ENCODE measurements at regions of chr1 and their contacts with region 1.

Region 1: DNA sequence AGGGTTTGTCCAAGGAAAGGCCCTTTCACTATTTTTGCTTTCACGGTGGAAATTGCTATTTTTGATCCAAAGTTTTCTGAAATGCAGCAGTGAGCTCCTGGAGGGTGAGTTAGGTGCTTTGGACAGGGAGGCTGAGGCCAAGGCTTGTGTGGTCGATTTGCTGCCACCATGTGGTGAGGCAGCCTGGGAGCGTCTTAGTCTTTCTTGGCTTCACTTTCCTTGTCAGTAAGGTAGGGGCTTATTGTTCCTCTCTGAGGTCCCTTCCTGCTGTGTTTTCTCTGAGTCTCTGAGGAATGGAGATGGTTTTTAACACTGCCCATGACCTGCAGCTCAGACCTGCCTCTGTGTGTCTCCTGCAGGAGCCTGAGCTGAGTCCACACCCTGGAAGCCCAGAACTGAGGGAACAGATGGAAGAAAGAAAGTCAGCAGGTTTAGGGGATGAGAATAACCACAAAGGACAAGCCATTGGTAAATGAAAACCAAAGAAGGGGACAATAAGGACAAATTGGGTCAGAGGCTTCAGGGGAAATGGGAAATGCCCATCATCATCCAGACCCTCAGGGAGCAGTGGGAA is 20.1 kb upstream of the S100A10 start:
- H3K4me3 ChIP-seq: no peak overlapping the region
- H3K27ac ChIP-seq: no peak overlapping the region
- H3K4me1 ChIP-seq: no peaks in the 10 kb centered on the region
- CTCF ChIP-seq: peak; percentile 51; the same call in 1 of the 2 replicates

Region 2: GRCh38 chr1:151867785-151868411 is 145.9 kb before region 1 on chr1:
- CTCF ChIA-PET with region 1: no interaction called
- POLR2A ChIA-PET with region 1: no interaction called
- H3K4me3 ChIP-seq: no peak overlapping the region
- H3K27ac ChIP-seq: no peak overlapping the region
- H3K4me1 ChIP-seq: no peaks in the 10 kb centered on the region
- CTCF ChIP-seq: no peak

Region 3: GRCh38 chr1:151881456-151881855 is 132.3 kb before region 1 on chr1:
- CTCF ChIA-PET with region 1: interaction called, 12 read pairs
- POLR2A ChIA-PET with region 1: no interaction called
- H3K4me3 ChIP-seq: no peak overlapping the region
- H3K27ac ChIP-seq: no peak overlapping the region
- H3K4me1 ChIP-seq: no peaks in the 10 kb centered on the region
- CTCF ChIP-seq: peak; percentile 35; the same call in 1 of the 2 replicates

Region 4: GRCh38 chr1:151920149-151920548 is 93.6 kb before region 1 on chr1:
- CTCF ChIA-PET with region 1: no interaction called
- POLR2A ChIA-PET with region 1: no interaction called
- H3K4me3 ChIP-seq: no peak overlapping the region
- H3K27ac ChIP-seq: no peak overlapping the region
- H3K4me1 ChIP-seq: no peaks in the 10 kb centered on the region
- CTCF ChIP-seq: no peak

Region 5: DNA sequence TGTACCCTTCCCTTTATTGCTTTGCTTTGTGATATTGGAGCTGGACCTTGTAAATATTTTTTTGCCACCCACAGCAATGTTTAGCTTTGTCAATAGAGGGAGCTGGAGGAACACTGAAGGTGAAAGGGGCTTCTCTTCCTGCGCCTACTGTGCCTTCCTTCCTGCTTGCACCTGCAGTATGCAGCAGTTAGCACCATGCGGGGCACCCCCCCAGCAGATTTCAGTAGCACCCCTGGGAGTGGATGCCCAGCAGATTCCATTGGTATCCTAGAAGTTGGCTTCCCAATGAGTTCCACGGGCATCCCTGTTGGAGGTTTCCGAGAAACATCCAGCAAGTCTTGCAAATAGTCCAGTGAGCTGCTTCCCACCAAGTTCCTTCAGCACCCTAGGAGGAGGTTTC is 45.7 kb before region 1 on chr1:
- CTCF ChIA-PET with region 1: interaction called, 32 read pairs
- POLR2A ChIA-PET with region 1: no interaction called
- H3K4me3 ChIP-seq: no peak overlapping the region
- H3K27ac ChIP-seq: no peak overlapping the region; the same call in 1 of the 2 replicates
- H3K4me1 ChIP-seq: peaks cover 8% of the 10 kb centered on the region; the same call in 1 of the 2 replicates
- CTCF ChIP-seq: peak; percentile 91

Region 6: DNA sequence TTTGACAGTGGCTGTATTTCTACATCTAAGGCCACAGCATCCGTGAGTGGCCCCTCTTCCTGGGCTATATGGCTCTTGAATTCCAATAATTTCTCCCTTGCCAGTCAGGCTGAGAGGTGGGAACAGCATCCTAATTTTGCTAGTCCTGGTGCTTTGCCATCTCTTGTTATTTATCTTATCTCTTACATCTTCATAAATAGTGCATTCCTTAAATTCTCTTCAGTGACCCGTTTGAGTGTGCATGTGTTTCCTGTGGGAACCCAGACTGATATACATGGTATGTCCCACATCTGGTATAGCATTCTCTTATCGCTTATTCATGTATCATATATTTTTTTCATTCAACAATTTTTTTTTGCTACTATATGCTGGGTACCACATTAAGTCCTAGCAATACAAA is 13.1 kb after region 1 on chr1:
- CTCF ChIA-PET with region 1: interaction called, 14 read pairs
- POLR2A ChIA-PET with region 1: no interaction called
- H3K4me3 ChIP-seq: no peak overlapping the region
- H3K27ac ChIP-seq: no peak overlapping the region
- H3K4me1 ChIP-seq: no peaks in the 10 kb centered on the region
- CTCF ChIP-seq: no peak

Region 7: DNA sequence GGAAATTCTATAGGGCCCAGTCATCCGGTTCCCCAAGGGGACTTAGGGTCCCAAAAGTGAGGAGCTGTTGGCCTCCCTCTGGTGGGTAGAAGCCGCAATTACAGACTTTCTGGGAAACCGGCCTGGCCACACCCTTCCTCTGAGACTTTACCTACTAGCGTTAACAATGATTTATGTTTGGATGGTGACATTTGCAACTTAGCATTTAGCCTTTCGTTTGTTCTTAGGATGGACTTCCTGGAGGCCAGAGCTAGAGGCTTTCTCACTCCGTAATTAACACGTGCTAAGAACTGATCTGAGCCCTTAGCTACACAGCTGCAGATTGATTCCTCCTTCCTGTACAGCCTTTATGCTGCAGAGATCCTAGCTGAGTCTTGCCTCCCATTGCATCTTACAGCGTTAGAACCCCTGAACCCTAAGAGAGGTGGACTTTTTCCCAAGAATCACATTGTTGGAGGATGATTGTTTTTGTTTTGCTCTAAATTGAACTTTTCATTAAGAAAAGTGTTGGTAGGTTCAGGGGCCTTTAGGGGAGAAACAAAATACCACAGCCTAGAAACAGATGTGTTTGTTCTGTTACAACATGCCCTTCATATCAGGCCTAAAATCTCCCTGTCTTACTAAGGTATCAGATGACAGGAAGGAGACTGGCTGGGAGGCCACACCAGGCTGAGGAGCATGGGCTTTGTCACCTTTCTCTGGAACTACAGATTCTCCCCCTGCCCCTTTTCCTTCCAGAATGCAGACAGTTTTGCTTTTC is 21.1 kb after region 1 on chr1:
- CTCF ChIA-PET with region 1: interaction called, 36 read pairs
- POLR2A ChIA-PET with region 1: no interaction called
- H3K4me3 ChIP-seq: peak overlapping the region; percentile 70
- H3K27ac ChIP-seq: peak overlapping the region; percentile 78
- H3K4me1 ChIP-seq: no peaks in the 10 kb centered on the region; the same call in 1 of the 2 replicates
- CTCF ChIP-seq: peak; percentile 43

Region 8: GRCh38 chr1:152252157-152252556 is 238.4 kb after region 1 on chr1:
- CTCF ChIA-PET with region 1: no interaction called
- POLR2A ChIA-PET with region 1: no interaction called
- H3K4me3 ChIP-seq: no peak overlapping the region
- H3K27ac ChIP-seq: no peak overlapping the region
- H3K4me1 ChIP-seq: no peaks in the 10 kb centered on the region
- CTCF ChIP-seq: no peak